Adrenal gland (tissue), 19 donors: ENCODE measurements at regions of chr1 and their contacts with region 1.

Region 1: DNA sequence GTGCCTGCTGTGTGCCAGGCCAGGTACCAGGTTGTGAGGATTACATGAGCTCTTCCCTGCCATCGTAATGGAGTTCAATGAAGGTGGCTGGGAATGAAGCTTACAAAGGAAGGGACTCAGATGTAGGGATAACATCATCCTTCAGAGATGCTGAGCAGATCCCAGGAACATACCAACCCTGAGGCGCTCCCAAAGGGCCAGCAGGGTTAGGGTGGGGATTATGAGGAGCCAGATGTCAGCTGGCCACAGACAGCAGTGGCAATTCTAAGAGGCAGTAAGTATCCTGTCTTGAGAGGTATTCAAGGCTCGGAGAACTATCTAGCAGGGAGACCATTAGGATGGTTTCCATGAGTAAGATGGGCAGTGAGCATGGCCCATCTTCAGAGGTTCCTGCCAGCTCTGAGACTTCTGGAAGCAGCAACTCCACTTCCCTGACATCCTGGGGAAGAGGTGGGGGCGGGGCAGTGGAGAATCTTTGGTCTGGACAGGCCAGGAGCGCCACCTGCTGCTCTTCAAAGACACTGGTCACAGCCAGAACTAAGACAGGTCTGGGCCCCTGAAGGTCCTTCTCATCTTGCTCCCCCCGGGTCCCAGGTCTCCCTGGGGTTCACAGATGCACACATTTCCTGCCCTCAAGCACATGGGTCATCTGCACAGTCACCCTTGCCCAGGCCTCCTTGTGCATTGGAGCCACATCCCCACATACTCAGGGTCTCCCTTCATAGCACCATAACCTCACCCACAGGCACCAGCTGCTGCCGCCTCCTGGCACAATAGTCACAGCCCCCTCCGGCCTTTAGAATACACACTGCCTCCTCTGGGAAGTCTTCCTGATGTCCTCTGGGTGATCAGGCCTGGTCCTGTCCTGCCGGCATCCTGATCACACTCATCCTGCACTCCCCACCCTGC is 2.7 kb upstream of the SDC3 start:
- DNase-seq: peak; percentile 86 to 97 (median 95)
- H3K4me3 ChIP-seq: no peak overlapping the region
- H3K27ac ChIP-seq: peak overlapping the region in 2 of 5 donors; percentile 24 to 71
- H3K4me1 ChIP-seq: peaks cover 20 to 26% of the 10 kb centered on the region in 2 donors
- H3K27me3 ChIP-seq: no peaks in the 10 kb centered on the region
- CTCF ChIP-seq: peak; percentile 71 to 96 (median 94)
- POLR2A ChIP-seq: no peak

Region 2: GRCh38 chr1:30719406-30720270 is 191.7 kb before region 1 on chr1:
- intact Hi-C with region 1: loop called in 1 of 2 experiments (anchors 5 kb)
- DNase-seq: peak in 2 of 7 donors; percentile 39 to 77
- H3K4me3 ChIP-seq: peak overlapping the region in 1 of 4 donors; percentile 49
- H3K27ac ChIP-seq: peak overlapping the region in 4 of 5 donors; percentile 96 to 99 (median 99)
- H3K4me1 ChIP-seq: peaks cover 7 to 10% of the 10 kb centered on the region in 2 donors
- H3K27me3 ChIP-seq: no peaks in the 10 kb centered on the region
- CTCF ChIP-seq: peak in 1 of 6 experiments; percentile 5
- POLR2A ChIP-seq: no peak

Region 3: DNA sequence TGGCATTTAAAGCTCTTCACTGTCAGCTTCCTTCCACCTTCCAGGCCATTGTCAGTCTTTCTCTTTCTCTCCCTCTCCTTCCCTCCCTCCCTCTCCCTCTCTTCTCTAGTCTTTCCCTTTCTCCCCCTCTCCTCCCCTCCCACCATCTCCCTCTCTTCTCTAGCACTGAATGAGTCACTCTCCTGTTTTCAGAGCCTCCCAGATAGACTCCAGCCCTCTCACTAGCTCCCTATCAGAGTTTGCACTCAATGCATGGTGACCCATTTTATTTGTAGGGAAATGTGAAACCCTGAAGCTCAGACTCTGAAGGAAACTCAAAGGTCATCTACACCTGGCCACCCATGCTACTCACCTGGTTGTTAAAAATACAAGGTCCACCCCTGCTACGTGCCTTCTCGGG is 183.5 kb before region 1 on chr1:
- intact Hi-C with region 1: loop called (anchors 5 kb)
- DNase-seq: peak in 2 of 7 donors; percentile 24 to 43
- H3K4me3 ChIP-seq: no peak overlapping the region
- H3K27ac ChIP-seq: no peak overlapping the region
- H3K4me1 ChIP-seq: no peaks in the 10 kb centered on the region
- H3K27me3 ChIP-seq: no peaks in the 10 kb centered on the region
- CTCF ChIP-seq: no peak
- POLR2A ChIP-seq: no peak

Region 4: DNA sequence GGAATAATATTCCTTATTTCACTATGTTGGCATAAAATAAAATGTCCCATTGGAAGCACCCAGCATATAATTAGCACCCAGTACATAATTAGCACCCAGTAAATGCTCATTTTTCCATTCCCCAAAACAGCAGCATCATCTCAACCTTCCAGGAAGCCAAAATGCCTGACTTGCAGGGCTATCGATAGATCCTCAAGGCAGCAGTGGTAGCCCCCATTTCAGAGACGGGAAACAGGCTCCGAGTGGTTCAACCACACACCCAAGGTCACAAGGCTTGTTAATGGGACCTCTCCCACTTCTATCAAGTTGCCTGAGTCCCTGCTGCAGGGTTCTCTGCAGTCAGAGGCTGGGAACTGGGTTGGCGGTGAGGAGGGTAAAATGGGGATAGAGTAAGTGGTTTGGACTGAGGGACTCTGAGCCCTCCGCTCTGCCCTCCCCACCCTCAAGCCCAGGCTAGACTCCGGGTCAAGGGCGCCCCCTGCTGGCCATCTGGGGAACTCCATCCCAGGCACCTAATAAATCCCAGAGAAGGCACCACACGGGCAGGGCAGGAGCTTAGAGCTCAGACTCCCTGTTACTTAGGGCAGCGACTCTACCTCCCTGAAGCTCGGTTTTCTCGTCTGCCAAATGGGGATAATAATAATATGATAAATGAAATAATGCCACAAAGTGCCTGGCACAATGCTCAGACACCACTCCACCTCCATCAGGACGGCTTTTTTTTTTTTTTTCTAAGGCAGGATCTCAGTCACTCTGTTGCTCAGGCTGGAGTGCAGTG is 131.8 kb before region 1 on chr1:
- intact Hi-C with region 1: loop called (anchors 5 kb)
- DNase-seq: peak; percentile 76 to 95 (median 88)
- H3K4me3 ChIP-seq: no peak overlapping the region
- H3K27ac ChIP-seq: no peak overlapping the region
- H3K4me1 ChIP-seq: peaks cover 14 to 16% of the 10 kb centered on the region in 2 donors
- H3K27me3 ChIP-seq: no peaks in the 10 kb centered on the region
- CTCF ChIP-seq: peak; percentile 97 to 99 (median 98)
- POLR2A ChIP-seq: no peak

Region 5: GRCh38 chr1:30801771-30802198 is 109.5 kb before region 1 on chr1:
- intact Hi-C with region 1: loop called (anchors 2 to 5 kb)
- DNase-seq: peak; percentile 74 to 93 (median 87)
- H3K4me3 ChIP-seq: no peak overlapping the region
- H3K27ac ChIP-seq: peak overlapping the region in 3 of 5 donors; percentile 8 to 59 (median 16)
- H3K4me1 ChIP-seq: peaks cover 36 to 49% of the 10 kb centered on the region in 2 donors
- H3K27me3 ChIP-seq: no peaks in the 10 kb centered on the region
- CTCF ChIP-seq: peak; percentile 90 to 98 (median 96)
- POLR2A ChIP-seq: peak in 1 of 2 donors; percentile 14